Activated naive CD4-positive, alpha-beta T cell treated with anti-CD3 and anti-CD28 coated beads for 36 hours (primary cell): ENCODE measurements at regions of chr19 and their contacts with region 1.

Region 1: DNA sequence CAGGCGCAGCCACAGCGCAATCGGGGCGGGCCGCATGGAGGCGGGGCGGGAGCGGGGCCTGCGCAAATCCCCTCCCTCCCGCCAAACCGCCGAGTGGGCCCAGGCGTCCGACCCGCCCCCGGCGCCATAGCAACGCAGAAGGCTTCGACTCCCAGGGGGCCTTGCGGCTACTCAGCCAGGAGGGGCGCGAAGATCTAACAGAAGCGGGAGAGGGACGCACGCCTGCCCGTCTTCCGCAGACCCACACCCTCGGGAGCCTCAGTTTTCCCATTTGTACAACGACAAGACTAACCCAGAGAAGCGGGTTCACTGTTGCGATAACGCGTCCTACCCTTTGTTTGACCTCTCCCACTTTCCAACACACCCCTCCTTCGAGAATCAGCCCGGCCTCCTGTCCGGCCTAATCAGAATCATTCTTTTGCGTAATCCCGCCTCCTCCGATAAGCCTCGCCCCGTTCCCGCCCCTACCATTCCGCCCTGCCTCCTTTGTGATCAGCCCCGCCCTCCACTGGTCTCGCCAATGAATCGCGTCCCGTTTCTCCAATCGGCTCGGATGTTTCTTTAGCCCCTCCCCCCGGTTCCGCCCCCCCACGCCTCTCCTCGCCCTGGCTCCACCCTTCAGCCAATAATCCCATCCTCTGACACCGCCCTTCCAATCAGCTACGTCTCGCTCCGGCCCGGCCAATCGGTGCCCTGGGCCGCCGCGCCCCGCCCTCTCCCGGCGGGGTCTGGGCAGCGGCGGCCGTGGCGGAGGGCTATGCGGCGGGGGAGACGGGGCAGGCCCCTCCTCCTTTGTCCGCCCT is at the start of gene PCSK4:
- DNase-seq: peak; percentile 99
- H3K4me3 Mint-ChIP-seq: peak within 1 kb of the TSS; percentile 81
- H3K27ac Mint-ChIP-seq: peak within 1 kb of the TSS; percentile 57
- H3K4me1 Mint-ChIP-seq: peaks cover 15% of the 10 kb centered on the region
- H3K27me3 Mint-ChIP-seq: peaks cover 4% of the 10 kb centered on the region
- total RNA-seq, gene PCSK4: 1.5 to 1.7 TPM

Region 2: GRCh38 chr19:1213391-1214286 is 276.9 kb before region 1 on chr19:
- CTCF ChIA-PET with region 1: no interaction called
- intact Hi-C with region 1: no loop called
- DNase-seq: peak; percentile 89
- H3K4me3 Mint-ChIP-seq: peak overlapping the region; percentile 79
- H3K27ac Mint-ChIP-seq: peak overlapping the region; percentile 98
- H3K4me1 Mint-ChIP-seq: peaks cover 41% of the 10 kb centered on the region
- H3K27me3 Mint-ChIP-seq: no peaks in the 10 kb centered on the region

Region 3: DNA sequence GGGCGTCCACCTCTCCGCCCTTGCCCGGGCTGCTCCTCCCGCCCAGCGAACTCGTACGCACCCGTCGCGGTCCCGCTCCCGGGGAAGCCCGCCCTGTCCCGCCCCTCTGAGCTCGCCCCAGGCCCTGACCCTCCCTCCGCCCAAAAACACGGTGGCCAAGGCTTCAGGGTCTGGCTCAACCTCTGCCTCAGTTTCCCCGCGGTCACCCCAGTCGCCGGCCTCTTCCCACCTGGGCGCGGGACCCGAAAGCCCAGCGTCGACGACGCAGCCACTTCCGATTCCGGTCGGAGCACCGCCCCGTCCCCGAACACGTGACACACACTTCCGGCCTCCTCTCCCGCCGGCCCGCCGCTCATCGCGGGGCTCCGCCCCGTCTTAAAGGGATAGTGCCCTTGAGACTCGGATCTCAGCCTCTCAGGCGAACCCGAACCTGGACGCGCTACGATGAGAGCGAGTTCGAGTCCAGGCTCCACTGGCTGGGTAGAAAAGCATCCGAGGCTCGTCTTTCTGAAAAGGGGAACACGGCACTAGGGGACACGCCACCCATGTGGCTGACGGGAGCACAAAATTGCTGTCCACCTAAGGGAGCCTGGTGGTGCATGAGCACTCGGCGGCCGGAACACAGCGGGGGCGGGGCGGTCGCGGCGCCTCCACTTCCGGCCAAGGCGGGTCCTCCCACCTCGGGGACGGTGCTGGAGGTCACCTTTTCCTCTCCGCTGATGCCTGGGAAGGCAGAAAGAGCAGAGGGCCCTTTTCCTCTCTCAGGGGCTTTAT is 11.4 kb before region 1 on chr19 and contains the start of gene C19orf25:
- CTCF ChIA-PET with region 1: no interaction called
- intact Hi-C with region 1: loop called (anchors 1 kb)
- DNase-seq: peak; percentile 96
- H3K4me3 Mint-ChIP-seq: peak within 1 kb of the TSS; percentile 99
- H3K27ac Mint-ChIP-seq: peak within 1 kb of the TSS; percentile 95
- H3K4me1 Mint-ChIP-seq: peaks cover 15% of the 10 kb centered on the region
- H3K27me3 Mint-ChIP-seq: no peaks in the 10 kb centered on the region
- total RNA-seq, gene C19orf25: 17.5 to 20.8 TPM

Region 4: DNA sequence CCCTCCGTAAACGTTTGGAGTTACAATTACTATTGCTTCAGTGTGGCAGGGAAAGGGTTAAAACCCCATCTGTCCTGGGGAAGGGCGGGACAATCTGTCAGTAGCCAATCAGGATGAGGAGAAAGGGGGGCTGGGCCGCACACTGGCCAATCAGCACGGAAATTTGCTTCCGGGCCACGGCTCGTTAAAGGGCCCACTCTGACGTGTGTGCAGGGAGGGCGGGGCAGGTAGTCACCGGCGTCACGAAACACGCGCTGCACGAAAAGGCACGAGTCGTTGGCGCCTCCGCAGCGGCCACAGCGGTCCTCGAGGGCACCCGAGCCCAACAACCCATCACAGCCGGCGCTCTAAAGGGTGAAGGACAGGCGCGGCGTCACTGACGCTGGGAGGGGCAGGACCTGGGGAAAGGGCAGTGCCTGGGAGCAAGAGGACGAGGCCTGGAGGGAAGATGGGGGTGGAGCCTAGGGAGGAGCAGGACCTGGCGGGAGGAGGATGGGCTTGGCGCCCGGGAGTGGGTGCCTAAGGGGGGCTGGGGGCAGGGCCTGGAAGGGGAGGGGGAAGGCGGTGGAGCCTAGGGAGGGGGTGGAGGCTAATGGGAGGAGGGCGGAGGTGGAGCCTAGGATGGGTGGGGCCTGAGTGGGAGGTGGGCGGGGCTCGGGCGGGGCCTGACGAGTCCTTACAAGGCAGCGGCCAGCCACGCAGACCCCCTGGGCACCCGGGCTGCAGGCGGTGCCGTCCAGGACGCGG is 17.4 kb after region 1 on chr19:
- CTCF ChIA-PET with region 1: interaction called, 7 read pairs
- intact Hi-C with region 1: loop called (anchors 1 kb)
- DNase-seq: peak; percentile 89
- H3K4me3 Mint-ChIP-seq: peak overlapping the region; percentile 77
- H3K27ac Mint-ChIP-seq: peak overlapping the region; percentile 20
- H3K4me1 Mint-ChIP-seq: peaks cover 21% of the 10 kb centered on the region
- H3K27me3 Mint-ChIP-seq: peaks cover 15% of the 10 kb centered on the region

Region 5: GRCh38 chr19:1652471-1653299 is 162.2 kb after region 1 on chr19 and contains the start of gene TCF3:
- CTCF ChIA-PET with region 1: no interaction called
- intact Hi-C with region 1: loop called (anchors 2 kb)
- DNase-seq: peak; percentile 98
- H3K4me3 Mint-ChIP-seq: peak within 1 kb of the TSS; percentile 82
- H3K27ac Mint-ChIP-seq: peak within 1 kb of the TSS; percentile 89
- H3K4me1 Mint-ChIP-seq: peaks cover 19% of the 10 kb centered on the region
- H3K27me3 Mint-ChIP-seq: no peaks in the 10 kb centered on the region
- total RNA-seq, gene TCF3: 84.8 to 86.7 TPM